ENCODE measurements at regions of chr2 and their contacts with region 1.

Region 1: GRCh38 chr2:19863303-19864041 is 38.3 kb downstream of the TTC32 start:
- DNase-seq: peak; percentile 55
- H3K4me3 ChIP-seq: no peak overlapping the region
- H3K27ac ChIP-seq: no peak overlapping the region
- H3K4me1 ChIP-seq: peaks cover under 1% of the 10 kb centered on the region
- H3K27me3 ChIP-seq: no peaks in the 10 kb centered on the region
- CTCF ChIP-seq: peak; percentile 88 to 94
- POLR2A ChIP-seq: no peak

Region 2: DNA sequence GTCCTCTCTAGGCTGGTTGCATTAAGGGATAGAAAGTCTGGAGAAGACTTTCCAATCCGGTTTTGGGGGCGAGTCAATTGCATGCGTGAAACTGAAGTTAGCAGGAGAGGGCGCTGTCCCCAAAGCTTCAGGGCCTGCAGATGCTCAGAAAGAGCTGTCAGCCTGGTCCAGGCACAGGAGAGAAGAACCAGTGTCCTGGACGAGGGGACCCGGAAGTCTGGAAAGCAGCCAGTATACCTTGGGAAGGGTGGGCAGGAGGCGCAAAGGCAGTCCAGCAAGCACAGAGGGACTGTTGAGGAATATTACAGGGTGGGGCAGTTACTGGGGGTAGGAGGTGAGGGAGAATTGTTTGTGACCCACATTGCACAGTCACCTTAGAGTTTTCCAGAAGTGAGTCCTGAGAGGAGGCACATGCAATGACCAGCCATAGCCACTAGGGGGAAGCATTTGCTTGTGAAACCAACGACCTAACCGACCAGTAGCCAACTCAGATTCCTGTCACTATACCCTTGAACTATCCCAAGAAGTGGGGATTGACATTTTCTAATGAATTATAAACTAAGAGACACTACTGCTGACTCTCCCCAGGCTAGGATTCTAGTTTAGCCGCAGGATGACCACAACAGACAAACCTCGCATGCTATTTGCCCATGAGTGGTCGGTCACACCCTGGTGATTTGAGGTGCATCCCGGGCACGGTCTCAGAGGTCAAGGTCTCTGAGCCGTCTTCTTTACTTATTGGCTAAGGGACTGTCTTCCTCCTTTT is 1475.8 kb before region 1 on chr2:
- CTCF ChIA-PET with region 1: no interaction called
- POLR2A ChIA-PET with region 1: no interaction called
- dilution Hi-C with region 1: no loop called
- intact Hi-C with region 1: loop called (anchors 1 kb)
- DNase-seq: peak; percentile 74
- H3K4me3 ChIP-seq: no peak overlapping the region
- H3K27ac ChIP-seq: no peak overlapping the region
- H3K4me1 ChIP-seq: peaks cover 12% of the 10 kb centered on the region
- H3K27me3 ChIP-seq: no peaks in the 10 kb centered on the region
- CTCF ChIP-seq: peak; percentile 85 to 92
- POLR2A ChIP-seq: no peak

Region 3: DNA sequence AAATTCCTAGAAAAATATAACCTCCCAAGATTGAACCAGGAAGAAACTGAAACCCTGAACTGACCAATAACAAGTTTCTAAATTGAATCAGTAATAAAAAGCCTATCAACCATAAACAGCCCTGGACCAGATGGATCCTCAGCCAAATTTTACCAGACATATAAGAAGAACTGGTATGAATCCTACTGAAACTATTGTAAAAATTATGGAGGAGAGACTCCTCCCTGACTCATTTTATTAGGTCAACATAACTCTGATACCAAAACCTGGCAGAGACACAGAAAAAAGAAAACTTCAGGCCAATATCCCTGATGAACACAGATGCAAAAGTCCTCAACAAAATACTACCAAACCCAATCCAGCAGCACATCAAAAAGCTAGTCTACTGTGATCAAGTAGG is 1285.4 kb before region 1 on chr2:
- CTCF ChIA-PET with region 1: no interaction called
- POLR2A ChIA-PET with region 1: interaction called, 10 read pairs
- dilution Hi-C with region 1: no loop called
- intact Hi-C with region 1: no loop called
- DNase-seq: no peak
- H3K4me3 ChIP-seq: no peak overlapping the region
- H3K27ac ChIP-seq: no peak overlapping the region
- H3K4me1 ChIP-seq: no peaks in the 10 kb centered on the region
- H3K27me3 ChIP-seq: no peaks in the 10 kb centered on the region
- CTCF ChIP-seq: no peak
- POLR2A ChIP-seq: no peak

Region 4: GRCh38 chr2:19347619-19348562 is 515.6 kb before region 1 on chr2:
- CTCF ChIA-PET with region 1: interaction called, 50 read pairs
- POLR2A ChIA-PET with region 1: no interaction called
- dilution Hi-C with region 1: no loop called
- intact Hi-C with region 1: loop called (anchors 1 kb)
- DNase-seq: peak; percentile 98
- H3K4me3 ChIP-seq: peak overlapping the region; percentile 14 to 58 (median 54)
- H3K27ac ChIP-seq: peak overlapping the region; percentile 63
- H3K4me1 ChIP-seq: peaks cover 5% of the 10 kb centered on the region
- H3K27me3 ChIP-seq: peaks cover 20 to 27% of the 10 kb centered on the region in 2 experiments
- CTCF ChIP-seq: no peak
- POLR2A ChIP-seq: peak; percentile 95

Region 5: DNA sequence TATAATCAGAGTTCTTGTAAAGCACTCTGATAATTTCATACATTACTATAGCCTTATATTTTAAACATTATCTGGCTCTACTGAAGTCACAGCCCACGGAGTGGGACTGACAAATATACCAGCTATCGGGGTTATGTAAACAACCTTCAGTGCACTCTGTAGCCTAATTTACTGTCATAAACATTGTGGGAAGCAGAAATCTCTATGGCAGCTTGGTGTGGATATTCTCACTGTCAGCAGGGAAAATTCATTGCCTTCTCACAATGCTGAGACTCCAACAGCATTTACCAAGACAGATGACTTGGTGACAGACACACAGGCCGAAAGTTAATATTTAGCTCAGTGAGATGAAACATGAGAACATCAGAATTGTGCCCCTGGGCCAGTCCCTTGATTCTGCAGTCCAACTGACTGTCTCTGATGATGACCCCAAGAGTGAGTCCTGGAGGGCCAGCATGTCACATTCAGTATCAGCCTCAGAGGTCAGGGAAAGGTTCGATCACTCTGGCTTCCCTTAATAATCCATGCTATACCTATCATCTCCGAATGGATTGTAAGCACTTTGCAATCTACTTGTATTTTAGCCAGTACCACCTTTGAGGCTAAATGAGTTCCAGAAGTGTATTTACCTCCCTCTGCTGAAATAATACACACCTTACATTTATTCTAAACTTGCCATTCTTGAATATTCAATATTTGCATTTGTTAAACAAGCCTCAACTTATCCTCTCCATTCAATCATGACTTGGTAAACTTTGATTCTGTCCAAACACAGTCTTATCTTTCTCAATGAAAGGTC is 358.9 kb before region 1 on chr2:
- CTCF ChIA-PET with region 1: no interaction called
- POLR2A ChIA-PET with region 1: no interaction called
- dilution Hi-C with region 1: no loop called
- intact Hi-C with region 1: no loop called
- DNase-seq: no peak
- H3K4me3 ChIP-seq: no peak overlapping the region
- H3K27ac ChIP-seq: no peak overlapping the region
- H3K4me1 ChIP-seq: no peaks in the 10 kb centered on the region
- H3K27me3 ChIP-seq: no peaks in the 10 kb centered on the region
- CTCF ChIP-seq: no peak
- POLR2A ChIP-seq: no peak

Region 6: DNA sequence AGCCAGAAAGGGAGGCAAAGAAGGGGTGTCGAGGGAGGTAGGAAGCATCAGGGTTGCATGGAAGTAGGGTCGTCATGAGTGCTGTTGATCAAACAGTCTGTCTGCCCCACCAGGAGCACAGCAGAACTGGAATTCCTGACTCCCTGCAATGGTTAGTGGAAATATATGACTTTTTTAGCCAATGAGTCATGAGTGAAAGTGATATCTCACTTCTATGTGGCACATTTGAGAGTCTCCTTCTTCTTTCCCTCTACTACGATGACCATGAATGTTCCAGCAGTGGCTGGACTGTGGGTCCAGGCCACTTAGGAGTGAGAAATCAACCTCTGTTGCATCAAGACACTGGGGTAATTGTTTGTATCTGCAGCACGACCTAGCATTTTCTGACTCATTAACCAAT is 161.2 kb before region 1 on chr2:
- CTCF ChIA-PET with region 1: no interaction called
- POLR2A ChIA-PET with region 1: no interaction called
- dilution Hi-C with region 1: no loop called
- intact Hi-C with region 1: loop called (anchors 2 kb)
- DNase-seq: no peak
- H3K4me3 ChIP-seq: no peak overlapping the region
- H3K27ac ChIP-seq: no peak overlapping the region
- H3K4me1 ChIP-seq: peaks cover 7% of the 10 kb centered on the region
- H3K27me3 ChIP-seq: no peaks in the 10 kb centered on the region
- CTCF ChIP-seq: no peak
- POLR2A ChIP-seq: no peak

Region 7: GRCh38 chr2:19722531-19722971 is 140.9 kb before region 1 on chr2:
- CTCF ChIA-PET with region 1: no interaction called
- POLR2A ChIA-PET with region 1: no interaction called
- dilution Hi-C with region 1: no loop called
- intact Hi-C with region 1: no loop called
- DNase-seq: no peak
- H3K4me3 ChIP-seq: no peak overlapping the region
- H3K27ac ChIP-seq: no peak overlapping the region
- H3K4me1 ChIP-seq: no peaks in the 10 kb centered on the region
- H3K27me3 ChIP-seq: peaks cover 0 to 3% of the 10 kb centered on the region in 2 experiments
- CTCF ChIP-seq: no peak
- POLR2A ChIP-seq: no peak

Region 8: DNA sequence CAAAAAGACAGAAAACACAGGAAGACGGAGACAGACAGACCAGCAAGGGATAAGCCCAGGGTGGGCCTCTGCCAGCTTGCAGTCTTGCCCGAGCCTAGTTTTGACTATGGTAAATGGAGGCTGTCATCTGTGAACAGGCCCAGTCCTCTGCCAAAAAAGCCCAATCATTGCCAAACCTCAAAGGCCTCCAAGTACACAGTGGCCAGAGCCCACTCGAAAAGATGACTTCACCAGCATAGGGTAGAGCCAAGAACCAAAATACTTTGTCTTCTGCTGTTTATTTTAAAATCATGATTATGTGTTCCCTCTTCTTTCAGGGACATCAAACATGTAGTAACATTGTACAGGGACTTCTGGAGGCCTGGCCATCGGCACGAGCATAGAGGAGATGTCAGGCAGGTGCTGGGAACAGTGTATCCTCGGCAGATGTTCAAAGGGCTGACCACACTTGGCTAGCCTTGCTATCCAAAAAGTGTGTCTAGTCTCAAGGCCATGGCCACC is 27.6 kb before region 1 on chr2:
- CTCF ChIA-PET with region 1: no interaction called
- POLR2A ChIA-PET with region 1: no interaction called
- dilution Hi-C with region 1: no loop called
- intact Hi-C with region 1: no loop called
- DNase-seq: no peak
- H3K4me3 ChIP-seq: no peak overlapping the region
- H3K27ac ChIP-seq: no peak overlapping the region
- H3K4me1 ChIP-seq: no peaks in the 10 kb centered on the region
- H3K27me3 ChIP-seq: peaks cover 0 to 5% of the 10 kb centered on the region in 2 experiments
- CTCF ChIP-seq: no peak
- POLR2A ChIP-seq: no peak

Region 9: GRCh38 chr2:19933351-19933981 is 70.0 kb after region 1 on chr2:
- CTCF ChIA-PET with region 1: interaction called, 3 read pairs
- POLR2A ChIA-PET with region 1: interaction called, 3 read pairs
- dilution Hi-C with region 1: no loop called
- intact Hi-C with region 1: loop called (anchors 1 kb)
- DNase-seq: peak; percentile 92
- H3K4me3 ChIP-seq: peak overlapping the region in 2 of 3 experiments; percentile 7 to 66
- H3K27ac ChIP-seq: peak overlapping the region; percentile 99
- H3K4me1 ChIP-seq: peaks cover 28% of the 10 kb centered on the region
- H3K27me3 ChIP-seq: no peaks in the 10 kb centered on the region
- CTCF ChIP-seq: no peak
- POLR2A ChIP-seq: peak; percentile 74

Region 10: GRCh38 chr2:20025066-20025794 is 161.8 kb after region 1 on chr2:
- CTCF ChIA-PET with region 1: no interaction called
- POLR2A ChIA-PET with region 1: no interaction called
- dilution Hi-C with region 1: no loop called
- intact Hi-C with region 1: no loop called
- DNase-seq: peak; percentile 36
- H3K4me3 ChIP-seq: no peak overlapping the region
- H3K27ac ChIP-seq: no peak overlapping the region
- H3K4me1 ChIP-seq: peaks cover 21% of the 10 kb centered on the region
- H3K27me3 ChIP-seq: no peaks in the 10 kb centered on the region
- CTCF ChIP-seq: no peak
- POLR2A ChIP-seq: no peak

Measured in endothelial cell of umbilical vein (primary cell).